RWPE1 (cell line): ENCODE measurements at regions of chrX and their contacts with region 1.

Region 1: DNA sequence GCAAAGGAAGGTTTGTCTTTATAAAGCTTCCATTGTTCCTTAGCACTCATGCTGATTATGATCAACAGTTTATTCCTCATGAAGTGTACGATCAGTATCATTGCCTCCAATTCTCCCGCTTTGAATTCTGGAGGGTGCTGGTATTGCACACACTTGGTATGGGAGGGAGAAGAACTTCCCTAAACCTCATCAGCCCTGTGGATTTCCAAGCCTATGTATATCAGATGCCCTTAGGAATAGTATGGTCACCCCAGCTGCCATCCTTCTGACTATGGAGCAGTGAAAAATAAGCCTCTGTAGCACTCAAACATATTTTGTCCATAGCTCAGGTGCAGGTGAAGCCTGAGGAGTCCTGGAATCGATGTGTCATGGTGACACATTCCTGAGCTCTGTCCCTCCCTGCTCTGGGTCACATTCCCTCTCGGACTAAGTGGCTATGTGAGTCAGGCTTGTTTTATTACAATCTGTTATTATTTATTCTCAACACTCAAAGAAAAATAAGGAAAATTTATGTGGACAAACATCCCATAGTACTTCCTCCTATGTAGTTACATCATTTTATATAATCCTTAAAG is 2.0 kb upstream of the ZDHHC9 start:
- DNase-seq: no peak
- H3K27ac ChIP-seq: no peak overlapping the region
- CTCF ChIP-seq: no peak

Region 2: GRCh38 chrX:129781134-129781672 is 64.5 kb before region 1 on chrX:
- CTCF ChIA-PET with region 1: interaction called, 10 read pairs
- POLR2A ChIA-PET with region 1: no interaction called
- DNase-seq: no peak
- H3K27ac ChIP-seq: no peak overlapping the region
- CTCF ChIP-seq: no peak

Region 3: GRCh38 chrX:130285069-130285620 is 439.4 kb after region 1 on chrX:
- CTCF ChIA-PET with region 1: no interaction called
- POLR2A ChIA-PET with region 1: no interaction called
- DNase-seq: no peak
- H3K27ac ChIP-seq: no peak overlapping the region
- CTCF ChIP-seq: no peak